CD4-positive, alpha-beta T cell (primary cell): ENCODE measurements at regions of chr2 and their contacts with region 1.

Region 1: DNA sequence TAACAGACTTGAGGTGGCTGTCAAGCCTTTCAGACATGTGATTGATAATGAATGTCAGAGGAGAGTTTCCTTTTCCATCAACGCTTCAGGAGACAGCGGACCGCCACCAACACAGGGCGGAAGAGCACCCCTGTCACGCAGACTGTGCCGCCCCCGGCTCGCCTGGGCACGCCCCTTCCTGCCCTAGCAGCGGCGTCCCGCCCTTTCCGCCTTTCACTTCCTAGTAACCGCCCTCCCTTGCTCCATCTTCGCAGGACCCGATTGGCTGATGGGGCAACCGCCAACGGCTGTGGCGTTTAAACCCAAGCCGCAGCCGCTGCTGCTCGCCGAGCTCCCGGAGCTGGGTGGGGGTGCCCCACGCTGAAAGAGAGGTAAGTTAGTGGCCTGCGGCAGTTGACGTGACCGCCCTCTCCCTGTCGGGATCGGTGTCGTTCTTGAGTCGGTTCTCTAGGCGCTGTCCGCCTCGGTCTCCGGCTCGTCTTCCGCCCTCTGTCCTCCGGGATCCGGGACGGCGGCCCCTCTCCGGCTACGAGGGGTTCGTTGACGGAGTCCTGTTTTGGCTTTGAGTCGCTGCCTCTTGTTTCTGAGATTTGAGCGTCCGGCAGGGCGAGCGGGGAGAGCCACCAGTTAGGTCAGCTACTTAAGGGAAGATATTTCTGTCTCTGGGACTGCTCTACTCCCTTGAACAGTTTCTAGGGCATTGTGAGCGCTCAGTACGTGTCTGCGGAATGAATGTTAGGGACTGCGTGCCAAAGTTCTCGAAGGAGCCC is at the start of gene SGO2:
- DNase-seq: peak; percentile 90 to 98 (median 94)
- ATAC-seq: peak; percentile 99
- H3K4me3 ChIP-seq: peak within 1 kb of the TSS; percentile 71
- H3K4me3 Mint-ChIP-seq: peak within 1 kb of the TSS; percentile 96
- H3K27ac ChIP-seq: peak within 1 kb of the TSS in 1 of 2 donors; percentile 0
- H3K27ac Mint-ChIP-seq: peak within 1 kb of the TSS; percentile 83
- H3K4me1 ChIP-seq: peaks cover 9% of the 10 kb centered on the region
- H3K4me1 Mint-ChIP-seq: peaks cover 13% of the 10 kb centered on the region
- H3K27me3 ChIP-seq: no peaks in the 10 kb centered on the region
- H3K27me3 Mint-ChIP-seq: no peaks in the 10 kb centered on the region
- CTCF ChIP-seq: no peak
- total RNA-seq, gene SGO2: 0.64 to 0.74 TPM

Region 2: GRCh38 chr2:200509612-200510433 is 16.2 kb before region 1 on chr2 and contains the start of gene KCTD18:
- CTCF ChIA-PET with region 1: interaction called, 31 read pairs
- POLR2A ChIA-PET with region 1: interaction called, 28 read pairs
- intact Hi-C with region 1: loop called (anchors 1 to 2 kb)
- DNase-seq: peak; percentile 81 to 94 (median 92)
- ATAC-seq: peak; percentile 99
- H3K4me3 ChIP-seq: peak within 1 kb of the TSS; percentile 84
- H3K4me3 Mint-ChIP-seq: peak within 1 kb of the TSS; percentile 95
- H3K27ac ChIP-seq: peak within 1 kb of the TSS; percentile 54
- H3K27ac Mint-ChIP-seq: peak within 1 kb of the TSS; percentile 91
- H3K4me1 ChIP-seq: peaks cover 27% of the 10 kb centered on the region
- H3K4me1 Mint-ChIP-seq: peaks cover 46% of the 10 kb centered on the region
- H3K27me3 ChIP-seq: no peaks in the 10 kb centered on the region
- H3K27me3 Mint-ChIP-seq: no peaks in the 10 kb centered on the region
- CTCF ChIP-seq: peak; percentile 72
- total RNA-seq, gene KCTD18: 18.9 to 19.8 TPM

Region 3: GRCh38 chr2:200515155-200515554 is 10.9 kb before region 1 on chr2:
- CTCF ChIA-PET with region 1: interaction called, 31 read pairs
- POLR2A ChIA-PET with region 1: interaction called, 28 read pairs
- intact Hi-C with region 1: loop called (anchors 1 to 2 kb)
- DNase-seq: peak in 3 of 14 experiments; percentile 19 to 48 (median 21)
- ATAC-seq: peak; percentile 75
- H3K4me3 ChIP-seq: no peak overlapping the region
- H3K4me3 Mint-ChIP-seq: peak overlapping the region; percentile 0
- H3K27ac ChIP-seq: no peak overlapping the region
- H3K27ac Mint-ChIP-seq: peak overlapping the region; percentile 14
- H3K4me1 ChIP-seq: peaks cover 21% of the 10 kb centered on the region
- H3K4me1 Mint-ChIP-seq: peaks cover 7% of the 10 kb centered on the region
- H3K27me3 ChIP-seq: no peaks in the 10 kb centered on the region
- H3K27me3 Mint-ChIP-seq: no peaks in the 10 kb centered on the region
- CTCF ChIP-seq: no peak

Region 4: DNA sequence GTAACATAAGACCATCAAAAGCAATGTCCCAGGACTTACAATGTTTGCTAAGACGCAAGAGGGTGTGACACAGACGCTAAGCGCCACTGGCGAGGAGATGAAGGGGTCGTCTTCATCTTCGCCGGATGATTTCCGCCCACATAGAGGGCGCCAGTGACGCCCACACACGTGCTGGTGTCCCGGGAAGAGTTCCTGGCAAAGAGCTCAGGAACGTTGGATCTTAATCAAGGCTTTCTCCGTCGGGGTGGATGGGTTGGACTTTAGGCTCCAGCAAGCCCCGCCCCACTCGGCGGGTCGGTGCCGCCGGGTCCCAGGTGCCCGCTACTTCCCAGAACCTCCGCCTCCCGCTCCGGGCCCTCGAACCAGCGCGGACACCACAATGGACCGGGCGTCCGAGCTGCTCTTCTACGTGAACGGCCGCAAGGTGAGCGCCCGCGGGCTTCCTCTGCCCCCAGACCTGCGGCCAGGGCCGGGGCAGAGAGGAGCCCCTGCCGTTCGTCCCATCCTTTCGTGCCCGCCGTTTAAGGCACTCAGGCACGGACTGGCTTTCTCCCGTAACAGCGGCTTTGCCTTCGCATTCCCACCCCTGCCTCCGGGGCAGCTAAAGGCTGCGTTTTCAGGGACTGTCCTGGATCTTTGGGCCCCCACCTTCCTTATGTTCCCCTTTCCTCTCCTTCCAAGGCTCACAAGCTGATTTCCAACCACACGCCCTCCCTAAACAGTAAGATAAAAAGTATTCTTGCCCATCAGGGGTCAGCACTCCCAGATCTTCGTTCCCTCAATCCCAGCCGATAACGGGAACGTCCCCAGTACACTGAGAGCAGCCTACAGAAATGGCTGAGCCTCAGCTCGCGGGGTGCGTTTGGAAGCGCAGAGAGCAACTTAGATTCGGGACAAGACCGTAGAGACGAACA is 59.9 kb after region 1 on chr2 and contains the start of gene AOX1:
- CTCF ChIA-PET with region 1: no interaction called
- POLR2A ChIA-PET with region 1: no interaction called
- intact Hi-C with region 1: no loop called
- DNase-seq: peak in 7 of 14 experiments; percentile 1 to 40 (median 17)
- ATAC-seq: peak; percentile 44
- H3K4me3 ChIP-seq: peak within 1 kb of the TSS; percentile 66
- H3K4me3 Mint-ChIP-seq: peak within 1 kb of the TSS; percentile 90
- H3K27ac ChIP-seq: no peak within 1 kb of the TSS
- H3K27ac Mint-ChIP-seq: no peak within 1 kb of the TSS
- H3K4me1 ChIP-seq: peaks cover 11% of the 10 kb centered on the region
- H3K4me1 Mint-ChIP-seq: peaks cover 9% of the 10 kb centered on the region
- H3K27me3 ChIP-seq: no peaks in the 10 kb centered on the region
- H3K27me3 Mint-ChIP-seq: peaks cover 3% of the 10 kb centered on the region
- CTCF ChIP-seq: no peak
- total RNA-seq, gene AOX1: not detected

Region 5: DNA sequence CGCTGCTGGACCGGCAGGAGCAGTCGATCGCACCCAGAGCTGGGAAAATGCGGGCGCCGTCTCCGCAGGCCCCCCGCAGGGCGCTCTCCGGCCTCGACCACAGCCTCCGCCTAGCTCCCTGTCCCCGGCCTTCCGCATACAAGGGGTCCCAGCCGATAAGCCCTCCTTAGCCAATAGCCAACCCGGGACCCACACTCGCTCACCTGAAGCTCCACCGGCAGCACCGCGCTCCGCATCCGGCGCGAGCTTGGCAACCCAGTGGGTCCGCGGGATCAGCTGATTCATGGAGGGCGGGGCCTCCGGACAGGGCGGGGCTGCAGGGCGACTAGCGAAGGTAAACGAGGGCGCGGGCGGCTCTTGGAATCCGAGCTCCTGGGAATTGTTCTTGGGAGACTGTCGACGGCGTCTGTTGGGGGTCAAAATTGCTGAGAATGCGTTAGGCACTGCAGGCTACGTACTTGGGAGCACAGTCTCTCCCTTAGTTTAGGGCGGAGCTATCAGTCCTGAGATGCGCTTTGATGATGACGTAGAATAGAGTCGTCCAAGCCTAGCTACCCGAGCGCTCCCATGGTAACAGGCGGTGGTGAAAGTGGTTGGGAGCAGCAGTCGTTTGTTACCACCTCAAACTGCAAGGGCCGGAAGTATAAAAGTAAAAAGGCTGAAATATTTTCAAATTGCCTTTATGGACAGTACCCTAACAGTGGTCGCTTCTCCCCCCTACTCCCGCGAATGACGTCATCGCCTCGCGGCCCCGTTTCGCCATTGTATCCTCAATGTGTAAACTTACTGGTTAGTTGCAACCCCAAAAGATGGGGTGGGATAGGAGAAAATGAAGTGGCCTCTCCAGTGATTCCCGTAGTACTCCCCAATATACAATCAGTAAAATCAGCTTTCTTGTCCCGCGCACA is 1254.9 kb after region 1 on chr2 and contains the start of gene ALS2:
- CTCF ChIA-PET with region 1: no interaction called
- POLR2A ChIA-PET with region 1: no interaction called
- intact Hi-C with region 1: loop called in 1 of 2 experiments (anchors 10 kb)
- DNase-seq: peak; percentile 86 to 96 (median 92)
- ATAC-seq: peak; percentile 90
- H3K4me3 ChIP-seq: peak within 1 kb of the TSS; percentile 66
- H3K4me3 Mint-ChIP-seq: peak within 1 kb of the TSS; percentile 98
- H3K27ac ChIP-seq: peak within 1 kb of the TSS; percentile 77 to 88
- H3K27ac Mint-ChIP-seq: peak within 1 kb of the TSS; percentile 93
- H3K4me1 ChIP-seq: peaks cover 15% of the 10 kb centered on the region
- H3K4me1 Mint-ChIP-seq: peaks cover 20% of the 10 kb centered on the region
- H3K27me3 ChIP-seq: no peaks in the 10 kb centered on the region
- H3K27me3 Mint-ChIP-seq: no peaks in the 10 kb centered on the region
- CTCF ChIP-seq: no peak
- total RNA-seq, gene ALS2: 7.0 to 7.2 TPM